Vagina (tissue), 2 donors: ENCODE measurements at regions of chr22 and their contacts with region 1.

Region 1: DNA sequence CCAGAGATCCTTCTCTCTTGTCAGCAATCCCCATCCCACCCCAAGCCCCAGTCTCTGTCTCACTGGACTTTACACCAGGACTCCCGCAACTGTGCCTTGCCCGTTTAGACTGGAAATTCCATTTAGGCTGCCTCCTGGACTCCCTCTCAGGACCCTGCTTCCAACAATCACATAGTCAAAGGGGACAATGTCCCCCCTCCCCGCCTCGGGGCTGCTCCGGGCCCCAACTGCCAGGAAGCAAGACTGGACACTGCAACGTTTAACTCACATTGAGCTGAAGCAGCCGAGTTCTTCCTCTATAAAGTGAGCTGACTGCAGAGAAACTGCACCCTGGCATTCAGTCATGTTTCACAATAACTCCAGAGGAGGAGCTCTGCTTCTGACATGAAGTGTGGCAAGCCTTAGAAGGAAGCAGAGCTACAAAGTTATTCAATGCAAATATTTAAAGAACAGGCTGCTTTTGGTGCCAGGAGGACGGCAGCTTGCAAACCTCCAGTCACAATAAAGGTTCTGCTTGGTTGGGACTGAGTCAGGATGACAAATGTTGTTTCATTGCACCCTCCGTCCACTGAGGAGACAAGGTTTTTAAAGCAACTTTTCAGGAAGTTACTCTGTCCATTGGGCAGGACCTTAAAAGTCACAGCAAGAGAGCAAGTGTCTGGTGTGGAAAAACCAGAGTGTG is 19.9 kb downstream of the PACSIN2 start:
- DNase-seq: no peak
- H3K4me3 ChIP-seq: peak overlapping the region; percentile 5 to 38
- H3K27ac ChIP-seq: peak overlapping the region; percentile 70
- H3K4me1 ChIP-seq: peaks cover 77% of the 10 kb centered on the region
- H3K27me3 ChIP-seq: no peaks in the 10 kb centered on the region
- CTCF ChIP-seq: no peak
- POLR2A ChIP-seq: peak in 1 of 2 donors; percentile 6

Region 2: DNA sequence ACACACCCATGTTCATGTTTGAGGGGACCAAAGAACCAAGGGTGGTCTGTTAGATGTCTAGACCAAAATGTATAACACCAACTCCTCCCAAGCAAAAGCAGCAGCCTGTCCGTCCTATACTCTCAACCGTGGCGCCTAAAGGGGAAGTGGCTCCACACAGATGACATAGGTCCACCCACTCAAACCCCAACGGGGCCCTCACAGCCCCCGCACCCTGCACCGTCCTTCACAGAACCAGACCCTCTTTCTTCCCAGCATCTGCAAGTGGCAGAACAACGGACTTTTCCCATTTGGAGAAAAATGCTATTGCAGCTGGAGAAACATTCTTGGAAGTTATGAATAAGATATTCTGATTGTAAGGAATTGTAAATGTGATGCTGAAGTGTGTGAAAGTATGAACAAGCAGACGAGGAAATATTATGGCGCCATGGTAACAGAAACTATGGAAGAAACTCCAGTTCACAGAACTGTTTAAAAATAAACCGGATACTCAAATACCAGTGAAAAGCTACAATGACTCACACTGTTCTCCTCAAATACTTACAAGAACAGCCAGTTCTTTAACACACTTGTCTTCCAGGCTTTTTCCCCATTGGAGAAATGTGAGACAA is 61.4 kb before region 1 on chr22:
- intact Hi-C with region 1: loop called (anchors 10 kb)
- DNase-seq: no peak
- H3K4me3 ChIP-seq: no peak overlapping the region
- H3K27ac ChIP-seq: peak overlapping the region; percentile 85
- H3K4me1 ChIP-seq: peaks cover 100% of the 10 kb centered on the region
- H3K27me3 ChIP-seq: no peaks in the 10 kb centered on the region
- CTCF ChIP-seq: no peak
- POLR2A ChIP-seq: no peak

Region 3: GRCh38 chr22:43053176-43053575 is 58.2 kb after region 1 on chr22:
- intact Hi-C with region 1: no loop called
- DNase-seq: no peak
- H3K4me3 ChIP-seq: no peak overlapping the region
- H3K27ac ChIP-seq: no peak overlapping the region
- H3K4me1 ChIP-seq: no peaks in the 10 kb centered on the region
- H3K27me3 ChIP-seq: no peaks in the 10 kb centered on the region
- CTCF ChIP-seq: no peak
- POLR2A ChIP-seq: no peak

Region 4: GRCh38 chr22:43628250-43628649 is 633.2 kb after region 1 on chr22:
- intact Hi-C with region 1: no loop called
- DNase-seq: no peak
- H3K4me3 ChIP-seq: no peak overlapping the region
- H3K27ac ChIP-seq: no peak overlapping the region
- H3K4me1 ChIP-seq: no peaks in the 10 kb centered on the region
- H3K27me3 ChIP-seq: no peaks in the 10 kb centered on the region
- CTCF ChIP-seq: no peak
- POLR2A ChIP-seq: no peak